GM18951 (cell line): ENCODE measurements at regions of chr20 and their contacts with region 1.

Region 1: GRCh38 chr20:4717816-4718570 is 3.7 kb upstream of the PRND start:
- POLR2A ChIP-seq: no peak

Region 2: GRCh38 chr20:4601630-4602296 is 116.2 kb before region 1 on chr20:
- in situ Hi-C with region 1: loop called (anchors 5 kb)
- POLR2A ChIP-seq: no peak

Region 3: GRCh38 chr20:5078399-5078958 is 360.5 kb after region 1 on chr20:
- in situ Hi-C with region 1: no loop called
- POLR2A ChIP-seq: no peak